ENCODE measurements at regions of chr6 and their contacts with region 1.

Region 1: DNA sequence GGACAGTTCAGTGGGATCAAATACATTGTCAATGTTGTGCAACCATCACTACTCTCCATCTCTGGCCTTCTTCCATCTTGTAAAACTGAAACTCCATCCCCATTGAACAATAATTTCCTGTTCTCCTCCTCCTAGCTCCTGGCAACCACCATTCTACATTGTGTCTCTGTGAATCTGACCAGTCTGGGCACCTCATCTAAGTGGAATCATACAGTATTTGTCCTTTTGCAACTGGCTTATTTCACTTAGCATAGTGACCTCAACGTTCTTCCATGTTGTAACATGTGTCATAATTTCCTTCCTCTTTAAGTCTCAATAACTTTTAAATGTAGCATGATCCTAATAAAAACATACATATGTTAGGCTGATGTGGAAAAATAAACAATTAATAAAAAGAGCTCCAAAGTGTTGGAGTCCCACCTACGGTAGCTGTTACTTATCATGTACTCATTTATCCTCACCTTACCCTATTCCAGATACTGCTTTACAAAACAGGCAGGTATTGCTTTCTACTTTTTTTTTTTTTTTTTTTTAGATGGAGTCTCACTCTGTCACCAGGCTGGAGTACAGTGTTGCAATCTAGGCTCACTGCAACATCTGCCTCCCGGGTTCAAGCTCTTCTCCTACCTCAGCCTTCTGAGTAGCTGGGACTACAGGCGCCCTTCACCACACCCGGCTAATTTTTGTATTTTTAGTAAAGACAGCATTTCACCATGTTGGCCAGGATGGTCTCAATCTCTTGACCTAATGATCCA is 91.9 kb downstream of the TNFAIP3 start:
- DNase-seq: no peak
- H3K4me3 ChIP-seq: no peak overlapping the region
- H3K27ac ChIP-seq: no peak overlapping the region
- H3K4me1 ChIP-seq: no peaks in the 10 kb centered on the region
- H3K27me3 ChIP-seq: no peaks in the 10 kb centered on the region
- CTCF ChIP-seq: no peak

Region 2: GRCh38 chr6:139940741-139941729 is 1982.0 kb after region 1 on chr6:
- CTCF ChIA-PET with region 1: no interaction called
- POLR2A ChIA-PET with region 1: no interaction called
- intact Hi-C with region 1: loop called (anchors 5 kb)
- DNase-seq: no peak
- H3K4me3 ChIP-seq: no peak overlapping the region
- H3K27ac ChIP-seq: no peak overlapping the region
- H3K4me1 ChIP-seq: peaks cover 35% of the 10 kb centered on the region
- H3K27me3 ChIP-seq: no peaks in the 10 kb centered on the region
- CTCF ChIP-seq: no peak